Activated B cell treated with CpG ODN at 0.5 μM for 24 hours (primary cell): ENCODE measurements at regions of chr3 and their contacts with region 1.

Region 1: GRCh38 chr3:46976326-46977190 is at the start of gene CCDC12:
- DNase-seq: peak; percentile 83
- ATAC-seq: peak; percentile 77
- H3K4me3 Mint-ChIP-seq: peak within 1 kb of the TSS; percentile 97
- H3K27ac Mint-ChIP-seq: peak within 1 kb of the TSS; percentile 97
- H3K4me1 Mint-ChIP-seq: peaks cover 76% of the 10 kb centered on the region
- H3K27me3 Mint-ChIP-seq: no peaks in the 10 kb centered on the region
- CTCF ChIP-seq: no peak
- total RNA-seq, gene CCDC12: 93.8 and 98.4 TPM in 2 replicates

Region 2: GRCh38 chr3:46337911-46338310 is 638.6 kb before region 1 on chr3:
- CTCF ChIA-PET with region 1: no interaction called
- POLR2A ChIA-PET with region 1: no interaction called
- intact Hi-C with region 1: no loop called
- DNase-seq: no peak
- ATAC-seq: no peak
- H3K4me3 Mint-ChIP-seq: no peak overlapping the region
- H3K27ac Mint-ChIP-seq: no peak overlapping the region
- H3K4me1 Mint-ChIP-seq: peaks cover 2% of the 10 kb centered on the region
- H3K27me3 Mint-ChIP-seq: no peaks in the 10 kb centered on the region
- CTCF ChIP-seq: no peak

Region 3: GRCh38 chr3:46386206-46386605 is 590.4 kb before region 1 on chr3:
- CTCF ChIA-PET with region 1: no interaction called
- POLR2A ChIA-PET with region 1: no interaction called
- intact Hi-C with region 1: no loop called
- DNase-seq: no peak
- ATAC-seq: no peak
- H3K4me3 Mint-ChIP-seq: no peak overlapping the region
- H3K27ac Mint-ChIP-seq: no peak overlapping the region
- H3K4me1 Mint-ChIP-seq: peaks cover 38% of the 10 kb centered on the region
- H3K27me3 Mint-ChIP-seq: no peaks in the 10 kb centered on the region
- CTCF ChIP-seq: no peak

Region 4: DNA sequence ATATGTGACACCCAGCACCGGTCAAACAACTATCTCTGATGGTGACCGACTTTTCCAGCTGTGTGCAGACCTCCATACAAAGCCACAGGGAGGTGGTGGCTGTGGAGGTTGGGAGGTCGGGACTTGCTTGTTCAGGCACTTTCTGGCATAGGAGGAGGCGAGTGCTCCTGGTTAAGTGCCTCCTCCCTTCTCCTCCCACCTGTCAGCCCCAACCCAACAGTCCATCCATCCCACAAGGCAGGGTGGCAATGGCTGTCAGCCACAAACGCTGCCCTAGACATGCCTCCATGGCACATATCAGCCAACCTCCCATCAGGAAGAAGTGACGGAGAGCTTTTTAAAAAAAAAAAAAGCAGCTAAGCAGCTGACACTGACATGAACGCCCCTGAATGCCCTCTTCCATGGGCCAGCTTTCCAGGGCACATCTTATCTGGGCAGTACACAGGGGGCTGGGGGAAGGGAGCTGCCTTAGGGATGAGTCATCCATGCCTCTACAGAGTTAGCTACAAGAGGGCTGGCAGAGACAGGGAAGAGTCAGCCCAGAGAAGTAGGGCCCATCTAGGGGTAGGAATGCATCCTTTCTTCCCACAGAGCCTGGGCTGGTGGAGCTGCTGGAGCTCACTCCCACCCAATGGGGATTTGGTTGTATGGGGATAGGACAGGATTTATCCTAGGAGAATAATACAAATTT is 41.2 kb before region 1 on chr3:
- CTCF ChIA-PET with region 1: interaction called, 3 read pairs
- POLR2A ChIA-PET with region 1: interaction called, 189 read pairs
- intact Hi-C with region 1: loop called (anchors 1 kb)
- DNase-seq: no peak
- ATAC-seq: no peak
- H3K4me3 Mint-ChIP-seq: no peak overlapping the region
- H3K27ac Mint-ChIP-seq: peak overlapping the region; percentile 56
- H3K4me1 Mint-ChIP-seq: peaks cover 89% of the 10 kb centered on the region
- H3K27me3 Mint-ChIP-seq: no peaks in the 10 kb centered on the region
- CTCF ChIP-seq: no peak

Region 5: GRCh38 chr3:46960081-46960701 is 16.4 kb before region 1 on chr3:
- CTCF ChIA-PET with region 1: interaction called, 3 read pairs
- POLR2A ChIA-PET with region 1: interaction called, 32 read pairs
- intact Hi-C with region 1: loop called (anchors 1 kb)
- DNase-seq: no peak
- ATAC-seq: peak; percentile 47
- H3K4me3 Mint-ChIP-seq: peak overlapping the region; percentile 57
- H3K27ac Mint-ChIP-seq: peak overlapping the region; percentile 69
- H3K4me1 Mint-ChIP-seq: peaks cover 80% of the 10 kb centered on the region
- H3K27me3 Mint-ChIP-seq: no peaks in the 10 kb centered on the region
- CTCF ChIP-seq: no peak

Region 6: DNA sequence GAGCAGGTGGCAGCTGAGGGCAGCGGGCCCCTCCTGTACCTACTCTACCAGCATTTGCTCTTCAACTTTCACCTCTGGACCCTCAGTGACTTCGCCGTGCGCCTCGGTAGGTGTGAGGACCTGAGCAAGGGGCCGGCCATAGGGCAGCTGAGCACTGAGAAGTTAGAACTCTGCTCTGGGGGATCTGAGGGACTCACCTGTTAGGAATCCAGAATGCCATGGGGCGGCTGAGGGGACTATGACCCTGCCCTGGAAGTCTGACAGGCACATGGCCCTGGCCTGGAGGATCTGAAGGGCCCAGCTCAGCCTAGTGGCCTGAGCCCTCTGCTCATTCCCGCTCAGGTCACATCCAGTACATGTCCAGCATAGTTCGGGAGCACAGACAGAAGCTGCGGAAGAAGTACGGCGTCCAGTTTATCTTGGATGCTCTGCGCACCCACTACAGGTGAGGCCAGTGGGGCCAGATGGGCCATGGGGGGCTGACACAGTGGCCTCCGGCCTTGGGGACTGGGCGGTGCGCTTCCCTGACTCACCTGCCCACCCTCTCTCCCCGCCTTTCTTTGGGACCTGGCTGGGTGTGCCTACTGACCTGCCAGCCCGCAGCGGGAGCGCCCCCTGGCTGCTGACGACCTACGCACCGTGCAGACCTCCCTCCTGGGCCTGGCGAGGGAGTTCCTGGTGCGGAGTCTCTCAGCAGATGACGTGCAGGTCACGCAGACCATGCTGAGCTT is 21.7 kb after region 1 on chr3:
- CTCF ChIA-PET with region 1: interaction called, 4 read pairs
- POLR2A ChIA-PET with region 1: interaction called, 19 read pairs
- intact Hi-C with region 1: loop called (anchors 1 kb)
- DNase-seq: peak; percentile 72
- ATAC-seq: peak; percentile 90
- H3K4me3 Mint-ChIP-seq: no peak overlapping the region
- H3K27ac Mint-ChIP-seq: no peak overlapping the region
- H3K4me1 Mint-ChIP-seq: peaks cover 10% of the 10 kb centered on the region
- H3K27me3 Mint-ChIP-seq: no peaks in the 10 kb centered on the region
- CTCF ChIP-seq: peak; percentile 24

Region 7: GRCh38 chr3:47016934-47017435 is 40.4 kb after region 1 on chr3:
- CTCF ChIA-PET with region 1: no interaction called
- POLR2A ChIA-PET with region 1: interaction called, 14 read pairs
- intact Hi-C with region 1: no loop called
- DNase-seq: no peak
- ATAC-seq: peak; percentile 89
- H3K4me3 Mint-ChIP-seq: peak overlapping the region; percentile 42
- H3K27ac Mint-ChIP-seq: peak overlapping the region; percentile 78
- H3K4me1 Mint-ChIP-seq: peaks cover 38% of the 10 kb centered on the region
- H3K27me3 Mint-ChIP-seq: no peaks in the 10 kb centered on the region
- CTCF ChIP-seq: no peak

Region 8: DNA sequence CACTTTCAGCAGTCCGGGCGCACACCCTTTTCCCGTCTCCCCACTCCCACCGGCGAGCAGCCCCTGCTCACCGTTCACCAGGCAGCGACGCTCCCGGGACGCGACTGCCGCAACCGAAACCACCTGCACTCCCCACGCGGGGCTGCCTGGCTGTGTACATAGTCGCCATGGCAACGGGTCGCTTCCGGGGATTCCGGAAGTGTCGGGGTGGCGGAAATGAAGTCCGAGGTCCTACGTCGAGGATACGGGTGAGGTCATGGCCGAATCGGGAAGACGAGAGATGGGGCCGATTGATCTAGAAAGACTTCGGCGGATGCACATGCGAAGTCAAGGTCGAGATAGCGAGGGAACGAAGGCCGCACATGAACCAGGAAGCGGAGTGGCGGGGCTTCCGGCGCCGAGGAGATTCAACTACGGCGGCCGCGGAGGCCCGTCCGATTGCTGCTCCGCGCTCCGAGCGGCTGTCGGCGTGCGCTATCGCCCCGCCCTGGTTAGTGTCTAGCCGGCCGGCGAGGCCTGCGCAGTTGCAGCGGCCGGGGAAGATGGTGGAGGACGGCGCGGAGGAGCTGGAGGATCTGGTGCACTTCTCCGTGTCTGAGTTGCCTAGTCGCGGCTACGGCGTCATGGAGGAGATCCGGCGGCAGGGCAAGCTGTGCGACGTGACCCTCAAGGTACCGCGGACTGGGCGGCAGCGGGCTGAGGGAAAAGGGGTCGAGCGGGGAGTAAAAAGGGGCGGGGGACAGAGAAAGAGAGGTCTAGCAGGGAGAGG is 306.1 kb after region 1 on chr3 and contains the starts of genes KIF9 and KLHL18:
- CTCF ChIA-PET with region 1: no interaction called
- POLR2A ChIA-PET with region 1: no interaction called
- intact Hi-C with region 1: loop called (anchors 1 kb)
- DNase-seq: peak; percentile 93
- ATAC-seq: peak; percentile 82
- H3K4me3 Mint-ChIP-seq: peak within 1 kb of the TSS; percentile 100
- H3K27ac Mint-ChIP-seq: peak within 1 kb of the TSS; percentile 99
- H3K4me1 Mint-ChIP-seq: peaks cover 53% of the 10 kb centered on the region
- H3K27me3 Mint-ChIP-seq: no peaks in the 10 kb centered on the region
- CTCF ChIP-seq: no peak
- total RNA-seq, gene KIF9: 2.3 and 2.5 TPM in 2 replicates
- total RNA-seq, gene KLHL18: 36.6 and 38.0 TPM in 2 replicates

Region 9: DNA sequence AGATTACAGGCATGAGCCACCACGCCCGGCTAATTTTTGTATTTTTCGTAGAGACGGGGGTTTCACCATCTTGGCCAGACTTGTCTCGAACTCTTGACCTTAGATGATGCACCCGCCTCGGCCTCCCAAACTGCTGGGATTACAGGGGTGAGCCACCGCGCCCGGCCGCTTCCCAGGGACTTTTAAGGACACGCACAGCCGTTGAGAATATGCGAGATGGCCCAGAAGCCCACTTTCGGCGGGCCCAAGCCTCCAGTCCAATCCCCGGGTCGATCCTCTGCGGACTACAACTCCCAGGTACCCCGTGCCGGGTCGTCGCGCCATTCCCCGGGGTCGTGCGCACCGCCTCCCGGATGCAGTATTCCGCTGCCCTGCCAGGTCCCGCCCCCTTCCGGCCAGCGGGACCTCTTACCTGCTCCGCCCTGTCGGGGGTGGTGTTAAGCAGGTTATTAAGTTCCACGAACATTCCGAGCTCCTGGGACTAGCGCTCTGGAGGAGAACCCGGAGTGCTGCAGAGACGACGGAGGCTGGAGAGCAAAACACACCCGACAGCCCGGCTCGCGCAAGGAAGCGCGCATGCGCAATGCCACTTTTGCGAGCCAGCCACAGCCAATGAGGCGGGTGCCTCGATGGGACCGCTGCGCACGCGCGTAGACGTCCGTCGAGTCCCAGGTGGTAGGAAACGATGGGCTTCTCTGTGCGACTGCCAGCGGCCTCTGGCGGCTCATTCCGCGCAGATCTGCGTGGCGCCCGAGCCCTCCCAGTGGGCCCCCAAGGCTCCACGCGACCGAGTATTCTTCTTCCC is 536.8 kb after region 1 on chr3 and contains the start of gene ELP6:
- CTCF ChIA-PET with region 1: no interaction called
- POLR2A ChIA-PET with region 1: no interaction called
- intact Hi-C with region 1: loop called (anchors 10 kb)
- DNase-seq: peak; percentile 95
- ATAC-seq: peak; percentile 93
- H3K4me3 Mint-ChIP-seq: peak within 1 kb of the TSS; percentile 98
- H3K27ac Mint-ChIP-seq: peak within 1 kb of the TSS; percentile 99
- H3K4me1 Mint-ChIP-seq: peaks cover 18% of the 10 kb centered on the region
- H3K27me3 Mint-ChIP-seq: no peaks in the 10 kb centered on the region
- CTCF ChIP-seq: no peak
- total RNA-seq, gene ELP6: 37.8 and 45.4 TPM in 2 replicates